ENCODE measurements at regions of chr12 and their contacts with region 1.

Region 1: DNA sequence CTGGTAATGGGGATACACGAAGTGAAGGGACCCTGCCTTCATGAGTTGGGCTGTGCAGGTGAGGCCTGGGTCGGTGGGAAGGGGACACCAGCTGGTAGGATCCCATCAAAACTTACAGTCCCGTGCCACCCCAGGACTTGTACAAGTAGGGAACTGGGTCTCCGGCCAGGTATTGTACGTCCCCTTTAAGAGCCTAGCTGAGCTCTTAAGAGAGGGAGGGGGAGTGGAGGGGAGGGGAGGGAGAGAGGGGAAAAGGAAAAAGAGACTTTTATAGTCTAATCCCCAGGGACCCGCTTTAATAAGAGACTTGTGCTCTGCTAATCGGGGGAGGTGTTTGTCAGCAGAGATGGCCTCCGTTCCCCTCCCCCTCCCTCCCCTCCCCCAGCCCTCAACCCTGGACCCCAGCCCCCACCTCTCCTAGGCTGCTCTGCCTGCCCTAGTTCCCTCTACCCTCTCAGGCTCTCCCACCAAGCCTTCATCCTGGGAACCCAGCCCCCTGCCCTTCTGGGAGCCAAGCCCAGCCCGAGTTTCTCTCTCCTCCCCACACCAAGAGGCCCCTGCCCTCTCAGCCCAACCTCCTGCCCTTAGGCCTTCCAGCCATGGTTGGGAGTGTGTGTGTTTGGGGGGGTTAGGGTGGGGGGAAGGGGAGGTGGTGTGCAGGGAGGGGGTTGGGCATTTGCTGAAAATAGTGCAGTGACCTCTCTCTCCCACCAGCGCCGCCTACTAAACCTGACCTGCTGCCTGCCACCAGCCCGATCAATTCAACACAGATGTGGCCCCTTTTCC is 2.6 kb downstream of the GDF11 start:
- DNase-seq: peak in 1 of 5 donors; percentile 63
- ATAC-seq: peak in 3 of 4 donors; percentile 5 to 44 (median 18)
- H3K4me3 ChIP-seq: peak overlapping the region in 9 of 12 donors; percentile 15 to 79 (median 27)
- H3K27ac ChIP-seq: peak overlapping the region in 8 of 12 donors; percentile 34 to 66 (median 62)
- H3K4me1 ChIP-seq: peaks cover 0 to 52% (median 28%) of the 10 kb centered on the region in 12 donors
- H3K27me3 ChIP-seq: peaks cover 0 to 6% (median 0%) of the 10 kb centered on the region in 9 donors
- CTCF ChIP-seq: no peak
- POLR2A ChIP-seq: no peak

Region 2: GRCh38 chr12:55789171-55789570 is 43.6 kb after region 1 on chr12:
- intact Hi-C with region 1: loop called in 3 of 10 experiments (anchors 5 kb)
- DNase-seq: no peak
- ATAC-seq: no peak
- H3K4me3 ChIP-seq: no peak overlapping the region
- H3K27ac ChIP-seq: no peak overlapping the region
- H3K4me1 ChIP-seq: no peaks in the 10 kb centered on the region
- H3K27me3 ChIP-seq: no peaks in the 10 kb centered on the region
- CTCF ChIP-seq: no peak
- POLR2A ChIP-seq: no peak

Region 3: DNA sequence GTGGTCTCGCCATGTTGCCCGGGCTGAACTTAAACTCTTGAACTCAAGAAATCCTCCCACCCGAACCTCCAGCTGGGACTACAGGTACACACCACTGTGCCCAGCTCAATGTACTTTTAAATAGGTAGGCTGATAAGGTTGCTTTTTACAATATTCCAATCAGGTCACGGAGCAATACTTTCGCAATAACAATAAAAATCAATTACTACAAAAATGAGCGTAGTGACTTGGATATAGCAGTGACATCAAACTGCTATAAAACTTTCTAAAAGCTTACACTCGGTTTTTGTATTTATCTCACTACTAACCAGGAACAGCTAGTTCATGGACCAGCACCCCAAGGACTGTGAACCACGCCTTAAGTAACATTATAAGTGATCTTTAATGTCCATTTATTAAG is 61.4 kb after region 1 on chr12:
- intact Hi-C with region 1: loop called in 2 of 10 experiments (anchors 5 kb)
- DNase-seq: no peak
- ATAC-seq: no peak
- H3K4me3 ChIP-seq: no peak overlapping the region
- H3K27ac ChIP-seq: no peak overlapping the region
- H3K4me1 ChIP-seq: peaks cover 0 to 17% (median 5%) of the 10 kb centered on the region in 12 donors
- H3K27me3 ChIP-seq: no peaks in the 10 kb centered on the region
- CTCF ChIP-seq: no peak
- POLR2A ChIP-seq: no peak

Measured in heart left ventricle (tissue), 16 donors.